GM13976 (cell line): ENCODE measurements at regions of chr4 and their contacts with region 1.

Region 1: DNA sequence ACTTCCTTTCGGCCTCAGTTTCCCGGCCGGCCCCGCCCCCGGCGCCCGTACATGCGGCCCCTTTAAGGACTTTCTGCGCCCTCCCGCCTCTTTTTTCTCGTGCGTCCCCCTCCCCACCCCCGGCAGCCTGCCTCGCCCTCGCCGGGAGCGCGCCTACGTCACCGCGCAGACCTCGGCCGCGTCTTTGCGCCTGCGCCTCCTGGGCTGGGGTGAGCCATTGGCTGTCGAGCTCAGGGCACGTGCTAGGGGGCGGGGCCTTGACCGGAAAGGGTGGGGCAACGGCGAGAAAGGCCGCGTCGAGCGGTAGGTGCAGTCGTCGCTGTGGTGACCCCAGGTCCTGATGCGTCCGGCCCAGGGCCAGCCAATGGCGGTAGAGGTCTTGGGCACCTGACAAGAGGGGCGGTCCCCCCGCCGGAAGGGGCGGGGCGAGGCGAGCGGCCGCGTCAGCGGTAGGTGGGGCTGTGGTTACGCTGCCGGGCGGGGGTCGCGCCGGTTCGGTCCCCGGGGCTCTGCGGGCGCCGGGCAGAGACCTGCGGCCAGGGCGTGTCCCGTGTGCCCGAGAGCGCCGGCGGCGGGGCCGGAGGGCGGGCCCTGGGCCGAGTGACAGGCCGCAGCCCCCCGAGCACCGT is at the start of gene UVSSA:
- DNase-seq: peak; percentile 100
- CTCF ChIP-seq: no peak

Region 2: DNA sequence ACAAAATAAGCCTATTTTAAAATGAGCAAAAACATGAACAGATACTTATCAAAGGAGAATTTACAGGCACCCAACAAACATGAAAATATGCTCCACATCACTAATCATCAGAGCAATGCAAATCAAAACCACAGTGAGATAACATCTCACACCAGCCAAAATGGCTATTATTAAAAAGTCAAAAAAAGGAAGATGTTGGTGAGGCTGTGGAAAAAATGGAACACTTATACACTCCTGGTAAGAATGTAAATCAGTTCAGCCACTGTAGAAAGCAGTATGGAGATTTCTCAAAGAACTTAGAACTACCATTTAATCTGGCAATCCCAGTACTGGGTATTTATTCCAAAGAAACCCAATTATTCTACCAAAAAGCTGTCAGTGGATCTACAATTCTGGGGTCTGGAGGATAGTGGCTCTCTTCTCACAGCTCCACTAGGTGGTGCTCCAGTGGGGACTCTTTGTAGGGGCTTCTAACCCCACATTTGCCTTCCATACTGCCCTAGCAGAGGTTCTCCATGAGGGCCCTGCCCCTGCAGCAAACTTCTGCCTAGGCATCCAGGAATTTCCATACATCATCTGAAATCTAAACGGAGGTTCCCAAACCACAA is 1032.5 kb before region 1 on chr4:
- in situ Hi-C with region 1: no loop called
- DNase-seq: no peak
- CTCF ChIP-seq: no peak

Region 3: DNA sequence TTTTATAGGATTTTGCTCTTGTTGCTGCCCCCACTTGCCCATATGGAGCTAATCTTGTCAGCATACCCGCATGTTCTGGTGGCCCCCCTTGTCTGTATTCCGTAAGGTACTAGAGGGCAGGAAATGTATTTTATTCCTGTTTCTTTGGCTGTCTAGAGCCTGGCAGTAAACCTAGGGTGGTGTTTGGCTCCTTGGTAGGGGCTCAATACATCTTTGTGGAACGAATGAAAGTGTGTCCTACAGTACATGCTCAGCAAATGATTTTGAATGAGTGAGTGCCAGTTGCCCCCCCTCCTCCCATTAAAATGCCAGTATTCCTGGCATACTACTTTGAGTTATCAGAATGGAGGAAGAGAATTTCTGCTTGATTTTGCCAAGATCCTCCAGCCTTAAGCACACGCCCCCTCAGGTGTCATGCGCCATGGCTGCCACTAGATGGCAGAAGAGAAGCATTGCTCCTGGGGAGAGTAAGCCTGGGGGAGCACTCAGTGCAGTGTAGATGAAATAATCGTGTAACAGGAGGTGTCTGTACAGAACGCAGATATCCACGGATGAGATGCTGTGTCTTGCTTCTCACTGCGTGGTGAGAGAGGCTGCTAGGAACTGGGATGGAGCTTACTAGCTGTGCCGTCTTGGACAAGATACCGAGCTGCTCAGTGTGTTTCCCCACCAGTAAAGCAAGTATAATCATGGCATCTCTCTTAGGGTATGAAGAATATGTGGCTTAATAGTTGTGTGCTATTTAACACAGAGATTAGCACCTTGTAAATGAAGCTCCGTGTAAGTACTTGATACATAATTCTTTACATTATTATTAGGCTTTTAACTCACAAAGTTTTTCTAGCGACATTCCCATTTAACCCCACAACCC is 216.3 kb before region 1 on chr4:
- in situ Hi-C with region 1: loop called (anchors 10 kb)
- DNase-seq: peak; percentile 74
- CTCF ChIP-seq: peak; percentile 99